ENCODE measurements at regions of chr4 and their contacts with region 1.

Region 1: DNA sequence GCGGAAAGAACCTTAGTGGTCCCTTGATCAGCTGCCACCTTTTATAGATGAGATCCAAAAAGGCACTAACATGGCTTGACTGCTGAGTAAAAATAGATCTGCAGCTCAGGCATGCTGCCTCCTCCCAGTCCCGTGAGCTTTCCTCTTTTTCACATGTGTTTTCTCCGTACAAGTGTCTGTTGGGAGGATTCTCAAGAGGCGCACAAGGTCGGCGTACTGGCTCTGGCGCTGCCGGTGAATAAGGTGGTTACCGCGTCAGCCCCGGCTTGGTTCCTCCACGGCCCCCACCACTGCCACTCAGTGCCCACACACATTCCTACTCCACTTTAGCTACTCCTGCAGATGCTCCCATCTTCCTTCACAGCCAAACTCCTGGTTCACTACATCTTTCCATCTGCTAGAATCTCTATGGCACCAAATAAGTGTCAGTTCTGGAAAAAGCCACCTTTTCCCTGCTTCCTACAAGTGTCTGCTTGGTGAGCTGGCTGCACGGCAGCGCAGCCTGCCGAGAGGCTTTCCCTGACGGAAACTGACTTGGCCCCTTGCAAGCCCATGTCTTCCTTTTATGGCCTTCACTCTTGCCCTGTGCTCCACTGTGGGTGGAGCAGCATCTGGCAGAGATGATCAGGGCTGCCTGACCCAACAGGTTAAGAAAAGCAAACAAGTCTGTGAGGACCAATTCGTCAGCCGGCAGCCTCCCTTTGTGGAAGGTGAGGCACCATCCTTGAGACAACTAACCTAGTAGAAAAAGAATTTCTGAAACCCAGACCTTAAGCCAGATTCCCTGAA is 99.8 kb downstream of the KLHL8 start:
- DNase-seq: peak; percentile 68 to 92
- H3K4me3 ChIP-seq: peak overlapping the region; percentile 41 to 45
- H3K27ac ChIP-seq: peak overlapping the region; percentile 78 to 79
- H3K4me1 ChIP-seq: peaks cover 0 to 80% (median 47%) of the 10 kb centered on the region in 4 donors
- H3K27me3 ChIP-seq: no peaks in the 10 kb centered on the region
- CTCF ChIP-seq: no peak

Region 2: GRCh38 chr4:87058356-87059073 is 62.1 kb before region 1 on chr4:
- intact Hi-C with region 1: loop called (anchors 5 kb)
- DNase-seq: no peak
- H3K4me3 ChIP-seq: no peak overlapping the region
- H3K27ac ChIP-seq: peak overlapping the region; percentile 72 to 79
- H3K4me1 ChIP-seq: peaks cover 0 to 86% (median 65%) of the 10 kb centered on the region in 4 donors
- H3K27me3 ChIP-seq: no peaks in the 10 kb centered on the region
- CTCF ChIP-seq: peak; percentile 26 to 29

Region 3: GRCh38 chr4:87339440-87339839 is 218.8 kb after region 1 on chr4:
- intact Hi-C with region 1: no loop called
- DNase-seq: no peak
- H3K4me3 ChIP-seq: no peak overlapping the region
- H3K27ac ChIP-seq: peak overlapping the region; percentile 32 to 71
- H3K4me1 ChIP-seq: peaks cover 0 to 32% (median 4%) of the 10 kb centered on the region in 4 donors
- H3K27me3 ChIP-seq: no peaks in the 10 kb centered on the region
- CTCF ChIP-seq: no peak

Measured in tibial artery (tissue), 4 donors.